ENCODE measurements at regions of chr12 and their contacts with region 1.

Region 1: GRCh38 chr12:4421590-4422031 is 24.0 kb downstream of the FGF6 start:
- H3K4me3 ChIP-seq: no peak overlapping the region
- H3K27ac ChIP-seq: no peak overlapping the region
- H3K4me1 ChIP-seq: no peaks in the 10 kb centered on the region
- CTCF ChIP-seq: peak; percentile 20; the same call in 1 of the 2 replicates

Region 2: DNA sequence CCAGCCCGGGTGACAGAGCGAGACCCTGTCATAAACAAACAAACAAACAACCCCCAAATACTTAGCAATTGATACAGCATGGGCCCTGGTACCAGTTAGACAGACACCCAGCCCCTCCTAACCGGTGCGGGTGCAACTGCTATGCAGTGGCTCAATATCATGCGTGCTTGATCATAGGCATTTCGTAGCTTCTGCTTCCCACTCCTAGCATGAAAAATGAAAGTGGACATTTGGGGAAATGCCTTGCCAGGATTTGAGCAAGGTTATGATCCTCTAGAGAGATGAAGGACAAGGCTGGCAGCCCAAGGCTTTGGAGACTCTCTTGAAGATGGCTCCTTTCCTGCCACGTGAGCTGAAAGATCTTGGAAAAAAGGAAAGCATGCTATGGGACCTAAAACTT is 10.3 kb after region 1 on chr12:
- CTCF ChIA-PET with region 1: interaction called, 10 read pairs
- POLR2A ChIA-PET with region 1: no interaction called
- H3K4me3 ChIP-seq: no peak overlapping the region
- H3K27ac ChIP-seq: no peak overlapping the region
- H3K4me1 ChIP-seq: no peaks in the 10 kb centered on the region
- CTCF ChIP-seq: no peak

Region 3: DNA sequence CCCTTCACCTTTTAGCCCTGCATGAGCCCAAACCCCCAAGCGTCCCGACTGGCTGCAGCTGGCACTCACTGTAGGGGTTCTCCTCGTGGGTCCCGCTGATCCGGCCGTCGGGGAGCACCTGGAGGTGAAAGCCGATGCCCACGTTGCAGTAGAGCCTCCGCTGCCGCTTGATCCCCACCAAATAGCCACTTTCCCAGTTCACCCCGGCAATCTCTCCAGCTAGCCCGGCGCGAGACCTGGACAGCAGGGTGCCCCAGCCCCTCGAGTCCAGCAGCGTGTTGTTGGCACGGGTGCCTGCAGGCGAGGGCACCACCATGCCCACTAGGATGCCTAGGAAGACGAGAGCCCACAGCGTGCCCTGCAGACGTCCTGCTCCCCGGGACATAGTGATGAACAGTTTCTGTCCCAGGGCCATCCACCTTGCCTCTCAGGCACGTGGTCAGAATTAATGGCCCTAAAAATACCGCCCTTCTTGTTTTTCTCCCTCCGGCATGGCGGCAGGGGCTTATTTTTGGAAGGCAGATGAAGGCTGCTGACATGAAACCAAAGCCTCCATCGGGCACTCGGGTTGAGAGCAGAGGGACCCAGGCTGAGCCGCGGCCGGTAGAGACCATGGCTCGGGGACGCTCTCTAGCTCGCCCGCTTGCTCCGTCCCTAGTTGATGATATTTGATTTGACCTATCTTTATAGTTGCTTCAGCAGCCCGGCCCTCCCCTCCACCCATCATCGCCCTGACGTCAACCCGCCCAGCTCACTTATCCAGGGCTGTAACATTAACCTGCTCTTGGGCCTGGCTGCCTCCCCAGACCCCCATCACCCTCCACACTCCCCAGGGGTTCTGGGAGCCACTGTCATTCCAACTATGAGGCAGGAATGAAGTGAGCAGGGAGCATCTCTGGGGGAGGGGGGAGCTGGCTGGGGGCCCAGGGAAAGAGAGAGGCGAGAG is 23.8 kb after region 1 on chr12 and contains the start of gene FGF6:
- CTCF ChIA-PET with region 1: interaction called, 15 read pairs
- POLR2A ChIA-PET with region 1: no interaction called
- H3K4me3 ChIP-seq: no peak within 1 kb of the TSS
- H3K27ac ChIP-seq: no peak within 1 kb of the TSS
- H3K4me1 ChIP-seq: peaks cover 13% of the 10 kb centered on the region
- CTCF ChIP-seq: no peak

Region 4: GRCh38 chr12:4526923-4527546 is 105.4 kb after region 1 on chr12:
- CTCF ChIA-PET with region 1: interaction called, 35 read pairs
- POLR2A ChIA-PET with region 1: no interaction called
- H3K4me3 ChIP-seq: no peak overlapping the region
- H3K27ac ChIP-seq: no peak overlapping the region
- H3K4me1 ChIP-seq: no peaks in the 10 kb centered on the region
- CTCF ChIP-seq: no peak